Calu3 (cell line): ENCODE measurements at regions of chrX and their contacts with region 1.

Region 1: DNA sequence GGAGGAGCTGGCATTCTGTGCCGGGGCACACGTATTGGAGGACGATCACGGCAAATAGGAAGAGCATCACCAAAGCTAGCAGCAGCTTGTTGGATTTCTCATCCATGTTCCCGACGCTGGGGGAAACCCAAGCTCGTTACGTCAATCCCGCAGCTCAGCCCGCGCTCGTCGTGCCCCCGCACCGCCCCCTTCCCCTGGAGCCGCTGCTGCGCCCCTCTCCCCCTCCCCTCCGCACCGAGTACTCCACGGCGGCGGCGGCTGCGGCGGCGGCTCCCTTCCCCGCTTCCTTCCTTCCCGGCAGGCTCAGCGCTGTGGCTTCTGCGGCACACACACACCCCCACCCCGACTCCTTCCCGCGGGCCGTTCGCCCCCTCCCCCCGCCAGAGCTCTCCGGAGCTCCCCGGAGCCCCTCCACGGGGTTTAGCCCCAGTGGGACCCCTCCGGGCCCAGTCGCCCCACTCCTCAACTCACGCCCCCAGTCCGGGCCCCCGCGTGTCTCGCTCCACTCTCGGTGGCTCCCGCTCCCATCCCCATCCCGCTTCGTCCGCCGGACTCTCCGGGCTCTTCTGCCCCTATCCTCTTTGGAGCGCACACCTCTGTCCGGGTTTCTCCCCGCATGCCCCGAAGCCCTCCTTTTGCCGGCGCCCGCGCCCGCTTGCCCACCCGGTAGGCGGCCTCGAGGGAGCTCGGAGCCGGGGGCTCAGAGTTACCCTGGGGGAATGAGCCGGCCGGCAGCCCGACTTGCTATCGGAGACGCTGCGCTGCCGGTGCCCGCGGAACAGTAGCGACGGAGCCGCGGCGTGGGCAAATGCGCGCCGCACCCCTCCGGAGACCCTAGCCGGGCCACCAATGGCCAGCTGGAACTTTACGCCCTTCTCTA is 978 bp downstream of the HS6ST2 start:
- DNase-seq: peak; percentile 54
- H3K4me3 Mint-ChIP-seq: peak overlapping the region; percentile 88
- H3K27ac Mint-ChIP-seq: peak overlapping the region; percentile 63
- H3K4me1 Mint-ChIP-seq: peaks cover 35% of the 10 kb centered on the region
- H3K27me3 Mint-ChIP-seq: no peaks in the 10 kb centered on the region
- CTCF ChIP-seq: peak; percentile 0

Region 2: DNA sequence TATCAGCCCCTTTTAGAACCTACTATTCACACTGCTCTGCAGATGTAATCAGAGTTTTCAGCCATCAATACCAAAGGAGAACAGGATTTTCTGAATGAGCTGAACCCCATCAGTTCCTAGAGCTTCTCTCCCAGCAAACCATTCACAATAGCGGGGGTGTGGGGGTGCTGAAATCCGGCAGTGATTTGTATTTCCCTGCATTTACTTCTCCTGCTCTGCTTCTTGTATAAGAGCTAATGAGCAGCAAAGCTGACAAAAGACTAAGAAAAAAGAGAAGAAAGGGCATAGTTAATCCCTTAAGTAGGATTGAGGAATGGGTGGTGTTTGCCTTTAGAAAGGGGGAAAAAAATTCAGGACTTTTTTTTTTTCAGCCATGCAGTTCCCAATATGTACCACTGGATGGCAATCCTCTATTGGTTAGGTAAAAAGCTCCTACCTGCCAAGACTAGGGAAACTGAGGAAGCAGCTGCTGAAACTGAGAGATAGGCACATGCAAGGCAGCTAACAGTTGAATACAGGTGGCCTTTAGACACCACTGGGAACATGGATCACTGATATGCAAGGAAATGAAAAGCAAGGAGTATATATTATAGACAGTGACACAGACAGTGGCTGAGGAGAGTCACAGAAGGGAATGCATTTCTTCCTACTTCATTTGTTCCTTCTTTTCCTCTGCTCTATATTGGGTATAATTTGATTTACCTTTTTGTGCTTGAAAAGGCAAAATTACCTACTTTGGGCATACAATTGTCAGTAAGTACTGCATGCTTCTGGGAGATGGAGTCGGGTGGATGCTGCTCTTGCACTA is 216.9 kb before region 1 on chrX:
- CTCF ChIA-PET with region 1: no interaction called
- intact Hi-C with region 1: loop called (anchors 5 kb)
- DNase-seq: no peak
- H3K4me3 Mint-ChIP-seq: no peak overlapping the region
- H3K27ac Mint-ChIP-seq: no peak overlapping the region
- H3K4me1 Mint-ChIP-seq: peaks cover 13% of the 10 kb centered on the region
- H3K27me3 Mint-ChIP-seq: no peaks in the 10 kb centered on the region
- CTCF ChIP-seq: peak; percentile 75